HEK293T (cell line): ENCODE measurements at regions of chr6 and their contacts with region 1.

Region 1: DNA sequence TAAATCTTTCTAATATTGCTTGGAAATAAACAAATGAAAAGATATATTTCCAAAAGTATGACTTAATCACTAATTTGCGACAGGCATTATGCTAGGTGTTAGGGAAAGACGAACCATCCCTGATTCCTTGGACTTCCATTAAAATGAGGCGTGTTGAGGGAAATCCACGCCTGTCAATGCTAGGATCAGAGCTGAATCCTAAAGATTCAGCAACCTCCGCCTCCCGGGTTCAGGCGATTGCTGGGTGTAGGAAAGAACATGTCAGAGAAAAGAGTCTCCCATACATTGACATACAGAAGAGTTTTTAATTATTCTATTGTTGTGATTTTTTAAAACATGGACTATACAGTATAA is 16.8 kb upstream of the PRSS16 start:
- DNase-seq: no peak

Region 2: GRCh38 chr6:26329763-26330511 is 900.8 kb before region 1 on chr6:
- CTCF ChIA-PET with region 1: interaction called, 10 read pairs
- POLR2A ChIA-PET with region 1: no interaction called
- DNase-seq: no peak

Region 3: GRCh38 chr6:27251606-27252251 is 21.0 kb after region 1 on chr6:
- CTCF ChIA-PET with region 1: no interaction called
- POLR2A ChIA-PET with region 1: interaction called, 10 read pairs
- DNase-seq: peak; percentile 91